ENCODE measurements at regions of chr16 and their contacts with region 1.

Region 1: DNA sequence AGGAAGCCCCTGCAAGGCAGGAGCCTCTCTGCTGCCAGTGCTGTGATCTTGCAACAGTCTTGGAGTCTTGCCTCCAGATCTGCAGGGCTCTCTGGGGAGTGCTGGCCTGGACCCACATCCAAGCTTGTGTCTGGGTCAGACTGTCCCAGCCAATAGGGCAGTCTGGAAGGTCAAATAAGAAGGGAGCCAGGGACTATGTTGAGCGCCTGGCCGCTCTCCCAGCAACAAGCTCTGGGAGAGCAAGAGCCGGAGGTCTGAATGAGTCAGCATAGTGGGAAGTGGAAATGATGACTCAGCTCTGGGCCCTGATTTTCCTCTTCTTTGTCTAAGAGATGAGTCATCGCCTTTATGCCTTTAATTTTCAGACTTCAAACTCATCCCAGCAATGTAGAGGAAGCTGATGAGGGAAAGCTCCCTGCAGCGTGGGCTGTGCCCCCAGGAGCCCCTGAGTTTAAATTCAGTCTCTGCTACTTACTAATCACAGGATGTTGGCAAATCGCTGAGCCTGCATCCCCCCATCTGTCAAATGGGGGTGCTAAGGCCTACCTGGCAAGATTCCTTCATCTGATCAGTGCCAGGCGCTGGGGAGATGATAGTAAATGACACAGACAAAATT is 43.6 kb upstream of the HAPSTR1 start:
- DNase-seq: peak; percentile 79 to 98
- ATAC-seq: peak; percentile 98
- H3K4me3 ChIP-seq: no peak overlapping the region
- H3K27ac ChIP-seq: peak overlapping the region; percentile 83 to 86
- H3K4me1 ChIP-seq: peaks cover 38% of the 10 kb centered on the region
- CTCF ChIP-seq: no peak
- EP300 ChIP-seq: peak; percentile 76 to 85; a peak in 3 of 5 replicates
- POLR2A ChIP-seq: no peak
- RAD21 ChIP-seq: peak in 1 of 2 experiments; percentile 43; a peak in 1 of 5 replicates

Region 2: GRCh38 chr16:9033125-9033830 is 14.5 kb before region 1 on chr16:
- CTCF ChIA-PET with region 1: interaction called, 20 read pairs
- POLR2A ChIA-PET with region 1: interaction called, 5 read pairs
- DNase-seq: peak; percentile 81 to 83
- ATAC-seq: peak; percentile 83 to 95; a peak in 5 of 6 replicates
- H3K4me3 ChIP-seq: no peak overlapping the region
- H3K27ac ChIP-seq: peak overlapping the region in 1 of 2 experiments; percentile 14; a peak in 1 of 6 replicates
- H3K4me1 ChIP-seq: no peaks in the 10 kb centered on the region
- CTCF ChIP-seq: peak; percentile 61
- EP300 ChIP-seq: no peak
- POLR2A ChIP-seq: no peak
- RAD21 ChIP-seq: peak; percentile 38 to 57; a peak in 2 of 5 replicates

Region 3: DNA sequence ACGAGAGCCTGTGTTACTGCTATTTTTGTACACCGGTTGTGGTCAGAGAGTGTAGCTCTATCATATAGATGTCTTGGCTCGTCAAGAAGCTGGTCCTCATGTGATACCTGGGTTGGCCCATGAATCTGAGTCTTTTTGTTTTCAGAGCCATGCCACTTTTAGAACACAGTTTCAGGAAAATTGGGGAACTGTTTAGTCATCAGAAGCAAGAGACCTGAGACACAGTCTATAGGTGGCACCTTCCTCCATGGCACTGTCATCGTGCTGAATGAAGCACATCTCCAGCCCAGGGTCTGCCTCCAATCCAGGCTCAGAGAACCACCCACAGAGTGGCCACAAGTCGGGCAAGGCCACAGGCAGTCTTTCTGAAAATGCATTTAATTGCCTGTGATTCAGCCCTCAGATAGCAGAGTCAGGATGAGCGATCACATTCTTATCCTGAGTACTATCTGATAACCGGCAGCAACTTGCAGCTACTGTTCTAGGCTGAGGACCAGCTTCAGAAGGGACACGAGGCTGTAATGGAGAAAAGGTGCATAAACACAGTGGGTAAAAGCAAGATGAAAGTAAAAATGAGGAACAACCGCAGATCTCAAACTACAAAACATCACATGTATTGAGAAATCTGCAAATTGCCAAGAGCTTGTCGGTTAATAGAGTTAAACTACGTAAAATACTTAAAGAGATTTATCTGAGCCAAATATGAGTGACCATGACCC is 29.5 kb after region 1 on chr16:
- CTCF ChIA-PET with region 1: interaction called, 4 read pairs
- POLR2A ChIA-PET with region 1: interaction called, 11 read pairs
- DNase-seq: peak in 1 of 2 experiments; percentile 79
- ATAC-seq: peak; percentile 87 to 89
- H3K4me3 ChIP-seq: no peak overlapping the region
- H3K27ac ChIP-seq: peak overlapping the region; percentile 57 to 83
- H3K4me1 ChIP-seq: peaks cover 35% of the 10 kb centered on the region
- CTCF ChIP-seq: no peak
- EP300 ChIP-seq: no peak
- POLR2A ChIP-seq: no peak
- RAD21 ChIP-seq: peak in 1 of 2 experiments; percentile 4; a peak in 1 of 5 replicates

Region 4: DNA sequence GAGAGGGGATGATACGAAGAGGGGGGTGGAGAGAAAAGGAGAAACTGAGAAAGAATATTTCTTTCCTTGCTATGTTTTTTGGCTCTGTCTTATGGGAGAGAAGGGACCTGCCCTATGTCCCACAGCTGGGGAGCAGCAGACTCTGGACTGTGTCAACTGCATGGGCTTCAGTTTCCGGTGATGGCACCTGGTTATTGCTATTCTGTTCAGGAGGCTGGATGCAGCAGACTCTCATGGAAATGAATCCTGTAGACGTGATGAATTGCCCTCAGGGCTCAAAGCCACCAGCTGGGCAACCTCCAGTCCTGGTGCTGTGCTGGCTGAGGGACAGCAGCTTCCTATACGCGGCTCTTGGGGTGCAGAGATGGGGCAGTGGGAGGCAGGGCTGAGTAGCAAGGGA is 164.8 kb after region 1 on chr16:
- CTCF ChIA-PET with region 1: no interaction called
- POLR2A ChIA-PET with region 1: no interaction called
- DNase-seq: no peak
- ATAC-seq: no peak
- H3K4me3 ChIP-seq: no peak overlapping the region
- H3K27ac ChIP-seq: no peak overlapping the region
- H3K4me1 ChIP-seq: no peaks in the 10 kb centered on the region
- CTCF ChIP-seq: no peak
- EP300 ChIP-seq: no peak
- POLR2A ChIP-seq: no peak
- RAD21 ChIP-seq: no peak

Measured in A549 (cell line).